SK-N-SH (cell line): ENCODE measurements at regions of chrX and their contacts with region 1.

Region 1: GRCh38 chrX:74550295-74550802 is 64.1 kb downstream of the RLIM start:
- DNase-seq: peak; percentile 75
- H3K4me3 ChIP-seq: no peak overlapping the region; a peak in 1 of 4 replicates
- H3K27ac ChIP-seq: no peak overlapping the region
- H3K4me1 ChIP-seq: no peaks in the 10 kb centered on the region; a peak in 1 of 4 replicates
- H3K27me3 ChIP-seq: no peaks in the 10 kb centered on the region
- CTCF ChIP-seq: peak; percentile 100
- EP300 ChIP-seq: no peak
- RAD21 ChIP-seq: peak; percentile 93

Region 2: GRCh38 chrX:74382613-74383012 is 167.7 kb before region 1 on chrX:
- CTCF ChIA-PET with region 1: interaction called, 24 read pairs
- POLR2A ChIA-PET with region 1: no interaction called
- DNase-seq: peak; percentile 62
- H3K4me3 ChIP-seq: no peak overlapping the region
- H3K27ac ChIP-seq: no peak overlapping the region
- H3K4me1 ChIP-seq: no peaks in the 10 kb centered on the region
- H3K27me3 ChIP-seq: no peaks in the 10 kb centered on the region; the same call in 1 of the 2 replicates
- CTCF ChIP-seq: peak; percentile 80
- EP300 ChIP-seq: no peak
- RAD21 ChIP-seq: peak; percentile 60